Activated CD8-positive, alpha-beta T cell treated with anti-CD3 and anti-CD28 coated beads, Interleukin-2, amount 10 ng/mL, durations not matched to agents 7 days and 5 days (primary cell): ENCODE measurements at regions of chr16 and their contacts with region 1.

Region 1: DNA sequence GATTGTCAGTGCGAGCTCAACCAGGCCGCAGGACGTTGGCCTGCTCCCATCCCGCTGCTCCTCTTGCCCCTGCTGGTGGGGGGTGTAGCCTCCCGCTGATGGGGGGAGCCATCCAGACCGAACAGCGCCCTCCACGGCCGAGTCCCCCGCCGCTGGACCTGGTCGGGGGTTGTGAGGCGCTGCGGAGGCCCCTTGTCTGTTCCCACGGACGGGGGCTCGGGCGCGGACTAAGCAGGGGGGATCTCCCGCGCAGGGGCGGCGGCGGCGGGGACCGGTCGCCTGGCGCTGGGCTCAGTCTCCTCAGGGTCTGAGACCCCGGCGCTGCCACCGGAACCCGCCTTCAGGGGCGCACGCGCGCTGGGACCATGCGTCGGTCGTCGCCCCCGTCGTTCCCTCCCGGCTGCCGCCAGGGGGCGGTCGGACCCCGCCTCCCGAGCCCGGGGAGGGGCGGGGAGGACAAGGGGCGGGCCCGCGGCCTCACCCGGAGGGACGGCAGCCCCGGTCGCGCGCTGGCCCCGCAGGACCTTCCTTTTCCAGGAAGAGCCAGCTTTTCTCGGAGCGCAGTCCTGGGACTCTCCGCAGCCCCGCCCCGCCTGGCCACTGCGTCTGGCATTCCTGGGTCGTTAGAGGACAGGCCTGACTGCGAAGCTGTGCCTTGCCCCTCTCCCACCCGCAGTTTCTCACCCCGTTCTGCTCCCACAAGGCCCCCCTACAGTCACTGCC is 6.3 kb upstream of the IL32 start:
- DNase-seq: peak; percentile 90
- ATAC-seq: peak; percentile 83
- H3K4me3 Mint-ChIP-seq: peak overlapping the region; percentile 94
- H3K27ac Mint-ChIP-seq: peak overlapping the region; percentile 94
- H3K4me1 Mint-ChIP-seq: peaks cover 71% of the 10 kb centered on the region
- H3K27me3 Mint-ChIP-seq: no peaks in the 10 kb centered on the region

Region 2: DNA sequence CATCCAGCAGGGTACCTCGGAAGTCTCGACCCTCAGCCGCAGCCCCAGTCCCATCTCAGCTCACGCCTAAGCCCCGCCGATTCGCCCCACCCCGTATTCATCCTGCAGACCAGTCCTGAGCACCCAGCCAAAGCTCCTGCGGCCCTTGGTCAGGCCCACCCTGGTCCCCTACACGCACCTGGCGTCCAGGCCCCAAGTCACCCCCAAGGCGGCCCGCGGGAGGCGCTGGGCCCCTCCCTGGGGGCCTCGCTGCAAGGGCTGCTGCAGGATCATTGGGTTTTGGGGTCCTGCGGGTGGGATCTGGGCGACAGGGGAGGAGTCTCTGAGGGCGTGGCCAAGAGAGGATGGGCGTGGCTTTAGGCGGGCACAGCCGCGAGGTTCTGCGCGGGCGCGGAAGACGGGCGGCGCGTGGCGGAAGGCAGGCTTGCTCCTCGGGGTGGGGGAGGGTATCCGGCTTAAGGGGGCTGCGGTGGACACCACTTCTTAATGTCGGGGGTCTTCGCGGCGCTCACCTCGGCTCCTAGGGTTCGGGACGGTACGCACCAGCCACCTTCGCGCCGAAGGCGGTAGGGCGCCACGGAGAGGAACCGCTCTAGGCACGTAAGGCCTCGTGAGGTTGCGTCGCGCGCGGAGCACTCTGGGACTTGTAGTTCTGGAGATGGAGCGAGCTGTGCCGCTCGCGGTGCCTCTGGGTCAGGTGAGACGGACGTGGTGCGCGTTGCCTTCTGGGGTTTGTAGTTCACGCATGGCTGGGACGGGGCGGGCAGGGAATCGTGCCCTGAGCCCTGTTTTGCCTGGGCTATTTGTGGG is 35.3 kb before region 1 on chr16 and contains the starts of genes HCFC1R1 and THOC6:
- CTCF ChIA-PET with region 1: interaction called, 41 read pairs
- POLR2A ChIA-PET with region 1: no interaction called
- DNase-seq: peak; percentile 98
- ATAC-seq: peak; percentile 80
- H3K4me3 Mint-ChIP-seq: peak within 1 kb of the TSS; percentile 85
- H3K27ac Mint-ChIP-seq: peak within 1 kb of the TSS; percentile 94
- H3K4me1 Mint-ChIP-seq: peaks cover 56% of the 10 kb centered on the region
- H3K27me3 Mint-ChIP-seq: peaks cover 3% of the 10 kb centered on the region
- total RNA-seq, gene HCFC1R1: 41.0 to 41.7 TPM
- total RNA-seq, gene THOC6: 57.4 to 57.9 TPM

Region 3: GRCh38 chr16:3036235-3036725 is 22.9 kb before region 1 on chr16:
- CTCF ChIA-PET with region 1: interaction called, 41 read pairs
- POLR2A ChIA-PET with region 1: interaction called, 5 read pairs
- DNase-seq: no peak
- ATAC-seq: peak; percentile 17
- H3K4me3 Mint-ChIP-seq: no peak overlapping the region
- H3K27ac Mint-ChIP-seq: no peak overlapping the region
- H3K4me1 Mint-ChIP-seq: peaks cover 16% of the 10 kb centered on the region
- H3K27me3 Mint-ChIP-seq: peaks cover 66% of the 10 kb centered on the region

Region 4: DNA sequence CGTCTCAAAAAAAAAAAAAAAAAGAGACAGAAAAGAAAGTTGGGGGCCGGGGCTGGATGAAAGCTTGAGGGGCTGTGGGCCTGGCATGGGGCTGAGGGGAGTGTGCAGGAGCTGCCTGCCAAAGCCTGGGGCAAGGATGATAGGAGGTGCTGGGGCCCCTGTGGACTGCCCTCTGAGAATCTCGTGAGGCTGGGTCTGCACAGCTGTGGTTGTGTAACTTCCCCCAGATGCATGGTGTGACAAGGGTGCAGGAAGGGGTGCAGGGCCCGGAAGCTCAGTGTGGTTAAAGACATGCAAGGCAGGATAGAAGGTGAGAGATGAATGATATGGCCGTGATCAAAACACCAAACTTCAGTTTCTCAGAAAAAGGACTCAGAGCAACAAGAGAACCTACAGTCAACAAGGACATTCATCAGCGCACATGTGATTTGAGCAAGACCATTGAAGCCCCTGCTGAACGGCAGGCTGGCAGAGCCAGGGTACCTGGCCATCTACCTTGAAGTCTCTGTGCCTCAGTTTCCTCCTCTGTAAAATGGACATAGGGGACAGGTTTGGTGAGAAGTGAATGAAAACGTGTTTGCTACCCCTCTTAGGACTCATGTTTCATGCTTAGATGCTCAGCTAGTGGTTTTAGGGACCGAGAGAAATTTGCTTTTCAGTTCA is 15.8 kb after region 1 on chr16:
- CTCF ChIA-PET with region 1: interaction called, 55 read pairs
- POLR2A ChIA-PET with region 1: interaction called, 68 read pairs
- DNase-seq: peak; percentile 95
- ATAC-seq: peak; percentile 85
- H3K4me3 Mint-ChIP-seq: peak overlapping the region; percentile 73
- H3K27ac Mint-ChIP-seq: peak overlapping the region; percentile 94
- H3K4me1 Mint-ChIP-seq: peaks cover 92% of the 10 kb centered on the region
- H3K27me3 Mint-ChIP-seq: no peaks in the 10 kb centered on the region

Region 5: DNA sequence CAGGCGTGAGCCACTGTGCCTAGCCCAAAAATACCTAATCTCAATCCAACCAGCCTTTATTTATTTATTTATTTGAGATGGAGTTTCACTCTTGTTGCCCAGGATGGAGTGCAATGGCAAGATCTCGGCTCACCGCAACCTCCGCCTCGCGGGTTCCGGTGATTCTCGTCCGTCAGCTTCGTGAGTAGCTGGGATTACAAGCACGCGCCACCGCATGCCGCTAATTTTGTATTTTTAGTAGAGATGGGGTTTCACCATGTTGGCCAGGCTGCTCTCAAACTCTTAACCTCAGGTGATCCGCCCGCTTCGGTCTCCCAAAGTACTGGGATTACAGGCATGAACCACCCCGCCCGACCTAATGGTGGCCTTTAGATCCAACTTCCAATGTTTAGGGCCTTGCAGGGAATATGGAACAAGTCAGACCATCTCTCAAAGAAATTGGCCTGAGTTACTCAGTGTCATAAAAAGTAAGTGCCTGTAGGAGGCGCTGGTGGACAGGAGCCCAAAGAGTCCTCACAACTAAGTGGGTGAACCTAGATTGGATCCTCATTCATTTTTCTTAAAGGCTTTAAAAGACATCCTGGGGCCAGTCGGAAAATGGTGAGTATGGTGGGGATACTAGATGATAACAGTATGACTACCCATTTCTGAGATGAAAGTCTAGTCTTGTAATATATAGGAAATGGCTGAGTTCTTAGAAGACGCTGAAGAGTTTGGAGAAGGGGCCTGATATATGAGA is 35.3 kb after region 1 on chr16:
- CTCF ChIA-PET with region 1: interaction called, 31 read pairs
- POLR2A ChIA-PET with region 1: interaction called, 4 read pairs
- DNase-seq: peak; percentile 67
- ATAC-seq: peak; percentile 38
- H3K4me3 Mint-ChIP-seq: no peak overlapping the region
- H3K27ac Mint-ChIP-seq: peak overlapping the region; percentile 69
- H3K4me1 Mint-ChIP-seq: peaks cover 65% of the 10 kb centered on the region
- H3K27me3 Mint-ChIP-seq: peaks cover 2% of the 10 kb centered on the region

Region 6: GRCh38 chr16:3123986-3124886 is 65.1 kb after region 1 on chr16:
- CTCF ChIA-PET with region 1: interaction called, 230 read pairs
- POLR2A ChIA-PET with region 1: interaction called, 26 read pairs
- DNase-seq: peak; percentile 99
- ATAC-seq: peak; percentile 89
- H3K4me3 Mint-ChIP-seq: peak overlapping the region; percentile 93
- H3K27ac Mint-ChIP-seq: peak overlapping the region; percentile 99
- H3K4me1 Mint-ChIP-seq: peaks cover 46% of the 10 kb centered on the region
- H3K27me3 Mint-ChIP-seq: peaks cover 4% of the 10 kb centered on the region

Region 7: DNA sequence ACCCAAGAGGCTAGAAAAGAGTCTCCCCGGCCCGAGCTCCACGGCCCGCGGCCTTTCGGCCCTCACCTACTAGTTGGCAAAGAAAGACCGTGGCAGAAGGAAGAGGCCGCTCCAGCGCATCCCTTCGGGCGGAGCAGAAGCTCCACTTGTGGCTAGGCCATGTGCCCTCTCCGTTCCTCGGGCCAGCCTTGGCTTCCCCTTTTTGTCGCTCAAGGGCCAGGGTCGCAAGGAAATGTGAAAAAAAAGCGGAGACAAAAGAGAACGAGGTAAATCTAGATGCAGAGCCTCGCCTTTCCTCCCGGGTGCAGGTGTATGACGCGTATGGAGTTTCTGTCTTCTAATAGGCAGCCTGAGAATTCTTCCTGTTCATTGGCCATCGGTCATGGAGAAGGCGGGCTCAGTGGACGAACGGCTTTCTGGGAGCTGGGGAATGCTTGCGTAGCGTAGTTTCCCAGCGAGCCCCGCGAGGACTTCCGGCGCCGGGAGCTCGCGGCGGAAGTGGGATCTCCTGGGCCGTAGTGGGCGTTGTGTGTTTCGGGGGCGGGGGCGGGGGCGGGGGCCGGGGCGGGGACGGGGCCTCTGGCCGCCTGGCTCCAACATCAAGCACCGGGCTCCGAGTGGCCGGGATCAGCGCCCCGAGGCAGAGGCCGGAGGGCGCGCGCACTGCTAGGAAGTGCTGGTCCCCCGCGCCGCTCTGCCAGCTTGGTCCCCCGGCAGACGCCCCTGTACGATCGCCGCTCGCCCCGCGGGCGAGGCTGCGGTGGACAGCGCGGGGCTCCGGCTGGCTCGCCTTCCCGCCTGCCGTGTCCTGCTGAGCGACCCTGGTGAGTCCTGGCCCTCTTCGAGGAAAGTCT is 75.6 kb after region 1 on chr16 and contains the start of gene ZNF213:
- CTCF ChIA-PET with region 1: interaction called, 230 read pairs
- POLR2A ChIA-PET with region 1: interaction called, 26 read pairs
- DNase-seq: peak; percentile 97
- ATAC-seq: peak; percentile 96
- H3K4me3 Mint-ChIP-seq: peak within 1 kb of the TSS; percentile 92
- H3K27ac Mint-ChIP-seq: peak within 1 kb of the TSS; percentile 96
- H3K4me1 Mint-ChIP-seq: peaks cover 38% of the 10 kb centered on the region
- H3K27me3 Mint-ChIP-seq: no peaks in the 10 kb centered on the region
- total RNA-seq, gene ZNF213: 10.8 to 12.1 TPM

Region 8: GRCh38 chr16:3242709-3243108 is 183.5 kb after region 1 on chr16:
- CTCF ChIA-PET with region 1: no interaction called
- POLR2A ChIA-PET with region 1: no interaction called
- DNase-seq: no peak
- ATAC-seq: no peak
- H3K4me3 Mint-ChIP-seq: no peak overlapping the region
- H3K27ac Mint-ChIP-seq: no peak overlapping the region
- H3K4me1 Mint-ChIP-seq: peaks cover 2% of the 10 kb centered on the region
- H3K27me3 Mint-ChIP-seq: no peaks in the 10 kb centered on the region